Endothelial cell of umbilical vein (primary cell): ENCODE measurements at regions of chr12 and their contacts with region 1.

Region 1: DNA sequence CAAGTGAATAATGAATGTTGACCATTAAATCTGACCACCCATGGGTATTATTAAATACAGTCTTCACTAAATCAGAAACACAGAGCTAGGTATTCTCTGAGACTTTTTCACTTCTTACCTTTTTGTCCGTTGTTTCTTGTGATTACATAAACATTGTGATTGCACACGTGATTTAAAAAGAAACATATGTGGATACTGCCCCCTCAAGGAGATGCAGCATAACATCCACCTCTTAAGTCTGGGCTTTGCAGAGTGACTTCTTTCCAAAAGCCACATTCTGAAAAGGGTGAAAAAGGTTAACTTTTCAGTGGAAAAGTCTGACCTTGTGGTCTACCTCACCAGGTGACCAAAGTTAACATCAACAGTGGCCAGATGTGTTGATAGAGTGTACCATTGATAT is 185.5 kb upstream of the FAR2 start:
- DNase-seq: peak; percentile 69
- H3K4me3 ChIP-seq: no peak overlapping the region
- H3K27ac ChIP-seq: no peak overlapping the region
- H3K4me1 ChIP-seq: peaks cover 39% of the 10 kb centered on the region
- H3K27me3 ChIP-seq: no peaks in the 10 kb centered on the region
- CTCF ChIP-seq: peak; percentile 48 to 51
- POLR2A ChIP-seq: no peak

Region 2: GRCh38 chr12:27733052-27733656 is 1230.4 kb before region 1 on chr12:
- CTCF ChIA-PET with region 1: interaction called, 3 read pairs
- POLR2A ChIA-PET with region 1: no interaction called
- dilution Hi-C with region 1: no loop called
- intact Hi-C with region 1: loop called (anchors 10 kb)
- DNase-seq: peak; percentile 51
- H3K4me3 ChIP-seq: no peak overlapping the region
- H3K27ac ChIP-seq: no peak overlapping the region
- H3K4me1 ChIP-seq: no peaks in the 10 kb centered on the region
- H3K27me3 ChIP-seq: no peaks in the 10 kb centered on the region
- CTCF ChIP-seq: peak; percentile 72 to 76
- POLR2A ChIP-seq: no peak

Region 3: GRCh38 chr12:28130625-28131598 is 832.6 kb before region 1 on chr12:
- CTCF ChIA-PET with region 1: no interaction called
- POLR2A ChIA-PET with region 1: no interaction called
- dilution Hi-C with region 1: no loop called
- intact Hi-C with region 1: loop called (anchors 2 kb)
- DNase-seq: peak; percentile 99
- H3K4me3 ChIP-seq: no peak overlapping the region
- H3K27ac ChIP-seq: peak overlapping the region; percentile 84
- H3K4me1 ChIP-seq: peaks cover 21% of the 10 kb centered on the region
- H3K27me3 ChIP-seq: no peaks in the 10 kb centered on the region
- CTCF ChIP-seq: no peak
- POLR2A ChIP-seq: no peak

Region 4: GRCh38 chr12:28242496-28243309 is 720.9 kb before region 1 on chr12:
- CTCF ChIA-PET with region 1: no interaction called
- POLR2A ChIA-PET with region 1: no interaction called
- dilution Hi-C with region 1: no loop called
- intact Hi-C with region 1: loop called (anchors 2 kb)
- DNase-seq: peak; percentile 47
- H3K4me3 ChIP-seq: no peak overlapping the region
- H3K27ac ChIP-seq: no peak overlapping the region
- H3K4me1 ChIP-seq: peaks cover 4% of the 10 kb centered on the region
- H3K27me3 ChIP-seq: no peaks in the 10 kb centered on the region
- CTCF ChIP-seq: no peak
- POLR2A ChIP-seq: no peak

Region 5: GRCh38 chr12:28550757-28551704 is 412.5 kb before region 1 on chr12:
- CTCF ChIA-PET with region 1: no interaction called
- POLR2A ChIA-PET with region 1: no interaction called
- dilution Hi-C with region 1: no loop called
- intact Hi-C with region 1: loop called (anchors 2 kb)
- DNase-seq: peak; percentile 72
- H3K4me3 ChIP-seq: no peak overlapping the region
- H3K27ac ChIP-seq: peak overlapping the region; percentile 73
- H3K4me1 ChIP-seq: peaks cover 6% of the 10 kb centered on the region
- H3K27me3 ChIP-seq: no peaks in the 10 kb centered on the region
- CTCF ChIP-seq: no peak
- POLR2A ChIP-seq: no peak

Region 6: GRCh38 chr12:28872654-28873268 is 90.8 kb before region 1 on chr12:
- CTCF ChIA-PET with region 1: interaction called, 5 read pairs
- POLR2A ChIA-PET with region 1: no interaction called
- dilution Hi-C with region 1: no loop called
- intact Hi-C with region 1: loop called (anchors 2 kb)
- DNase-seq: peak; percentile 70
- H3K4me3 ChIP-seq: no peak overlapping the region
- H3K27ac ChIP-seq: no peak overlapping the region
- H3K4me1 ChIP-seq: no peaks in the 10 kb centered on the region
- H3K27me3 ChIP-seq: no peaks in the 10 kb centered on the region
- CTCF ChIP-seq: peak; percentile 69 to 74
- POLR2A ChIP-seq: no peak

Region 7: GRCh38 chr12:29102741-29103140 is 139.2 kb after region 1 on chr12:
- CTCF ChIA-PET with region 1: no interaction called
- POLR2A ChIA-PET with region 1: no interaction called
- dilution Hi-C with region 1: no loop called
- intact Hi-C with region 1: no loop called
- DNase-seq: no peak
- H3K4me3 ChIP-seq: no peak overlapping the region
- H3K27ac ChIP-seq: no peak overlapping the region
- H3K4me1 ChIP-seq: no peaks in the 10 kb centered on the region
- H3K27me3 ChIP-seq: no peaks in the 10 kb centered on the region
- CTCF ChIP-seq: no peak
- POLR2A ChIP-seq: no peak